Testis (tissue), 5 donors: ENCODE measurements at regions of chr3 and their contacts with region 1.

Region 1: DNA sequence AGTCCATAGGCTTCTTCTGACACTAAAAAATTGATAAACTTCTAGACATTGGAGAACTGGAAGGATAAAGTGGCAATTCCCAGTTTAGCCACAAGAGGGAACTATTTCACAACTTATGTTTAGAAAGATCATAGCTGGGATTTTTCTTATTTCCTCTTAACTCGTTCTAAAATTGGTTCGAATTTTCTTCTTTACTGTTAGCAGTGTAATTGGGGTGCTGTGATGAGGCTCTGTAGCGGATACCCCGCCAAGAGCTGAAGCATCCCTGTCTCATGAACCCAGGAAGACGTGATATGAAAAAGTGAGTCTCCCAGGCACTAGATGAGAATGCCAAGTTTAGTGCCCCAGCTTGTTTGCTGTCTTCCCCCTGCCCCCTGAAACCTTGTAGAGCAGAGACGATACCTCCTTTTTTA is 85.1 kb downstream of the PDCD6IP start:
- DNase-seq: no peak
- H3K4me3 ChIP-seq: peak overlapping the region in 1 of 2 donors; percentile 15
- H3K27ac ChIP-seq: no peak overlapping the region
- H3K4me1 ChIP-seq: no peaks in the 10 kb centered on the region
- H3K27me3 ChIP-seq: no peaks in the 10 kb centered on the region
- CTCF ChIP-seq: peak; percentile 70 to 91 (median 70)
- POLR2A ChIP-seq: no peak

Region 2: GRCh38 chr3:33749546-33750210 is 133.9 kb before region 1 on chr3:
- intact Hi-C with region 1: no loop called
- DNase-seq: no peak
- H3K4me3 ChIP-seq: no peak overlapping the region
- H3K27ac ChIP-seq: no peak overlapping the region
- H3K4me1 ChIP-seq: no peaks in the 10 kb centered on the region
- H3K27me3 ChIP-seq: no peaks in the 10 kb centered on the region
- CTCF ChIP-seq: no peak
- POLR2A ChIP-seq: no peak

Region 3: DNA sequence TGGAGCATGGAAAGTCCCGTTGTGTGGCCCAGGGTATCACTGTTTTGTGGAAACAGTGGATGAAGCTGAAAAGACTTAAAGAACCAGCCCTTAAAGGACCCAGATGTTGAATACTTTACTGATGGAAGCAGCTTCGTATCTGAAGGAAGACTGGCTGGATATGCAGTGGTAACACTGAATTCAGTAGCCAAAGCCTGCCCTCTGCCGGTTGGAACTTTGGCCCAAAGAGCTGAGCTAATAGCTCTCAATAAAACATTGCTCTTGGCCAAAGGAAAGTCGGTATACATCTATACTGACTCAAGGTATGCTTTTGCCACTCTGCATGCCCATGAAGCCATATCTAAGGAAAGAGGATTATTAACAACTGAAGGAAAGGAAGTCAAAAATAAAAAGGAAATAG is 800.3 kb after region 1 on chr3:
- intact Hi-C with region 1: loop called (anchors 10 kb)
- DNase-seq: peak; percentile 80
- H3K4me3 ChIP-seq: no peak overlapping the region
- H3K27ac ChIP-seq: no peak overlapping the region
- H3K4me1 ChIP-seq: no peaks in the 10 kb centered on the region
- H3K27me3 ChIP-seq: no peaks in the 10 kb centered on the region
- CTCF ChIP-seq: peak; percentile 43 to 65 (median 47)
- POLR2A ChIP-seq: no peak